ENCODE measurements at regions of chr9 and their contacts with region 1.

Region 1: DNA sequence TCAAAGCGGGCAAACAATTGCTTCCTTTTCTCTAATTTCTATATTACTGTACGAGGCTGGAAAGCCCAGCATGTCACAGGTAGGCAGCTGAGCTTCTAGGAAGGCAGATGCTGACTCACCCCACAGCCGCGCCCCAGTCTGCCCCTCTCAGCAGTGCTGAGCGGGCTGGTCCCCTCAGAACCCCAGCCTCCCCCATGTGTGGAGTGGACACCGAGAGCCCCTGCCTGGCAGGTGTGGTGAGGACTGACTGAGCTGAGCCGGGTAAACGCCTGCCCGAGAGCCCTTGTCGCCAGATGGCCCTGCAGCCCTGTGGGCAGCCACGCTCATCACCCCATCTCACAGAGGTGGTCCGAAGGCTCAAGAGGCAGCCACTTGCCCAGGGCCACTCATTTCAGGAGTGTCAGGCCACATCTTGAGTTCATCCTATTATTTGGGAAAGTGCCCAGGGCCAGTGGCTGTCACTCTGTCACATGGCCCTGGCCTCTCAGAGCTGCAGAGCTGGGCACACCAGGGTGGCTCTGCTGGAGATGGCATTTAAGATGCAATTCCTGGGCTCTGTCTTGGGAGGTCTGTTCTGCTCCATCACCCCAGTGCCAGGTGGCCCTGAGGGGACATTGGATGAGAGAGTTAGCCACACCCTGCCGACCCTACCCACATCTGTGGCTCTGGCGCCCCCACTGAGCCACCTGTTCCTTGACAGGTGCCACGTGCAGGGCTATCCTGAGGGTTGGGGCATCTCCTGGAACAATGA is 12.4 kb downstream of the CARD19 start:
- DNase-seq: no peak
- ATAC-seq: peak in 3 of 4 experiments; percentile 36 to 62 (median 55)
- H3K4me3 ChIP-seq: no peak overlapping the region
- H3K4me3 Mint-ChIP-seq: no peak overlapping the region
- H3K27ac ChIP-seq: no peak overlapping the region
- H3K27ac Mint-ChIP-seq: no peak overlapping the region
- H3K4me1 ChIP-seq: peaks cover 0 to 37% of the 10 kb centered on the region in 2 experiments
- H3K4me1 Mint-ChIP-seq: peaks cover 50 to 58% (median 53%) of the 10 kb centered on the region in 3 donors
- H3K27me3 ChIP-seq: no peaks in the 10 kb centered on the region
- H3K27me3 Mint-ChIP-seq: no peaks in the 10 kb centered on the region

Region 2: DNA sequence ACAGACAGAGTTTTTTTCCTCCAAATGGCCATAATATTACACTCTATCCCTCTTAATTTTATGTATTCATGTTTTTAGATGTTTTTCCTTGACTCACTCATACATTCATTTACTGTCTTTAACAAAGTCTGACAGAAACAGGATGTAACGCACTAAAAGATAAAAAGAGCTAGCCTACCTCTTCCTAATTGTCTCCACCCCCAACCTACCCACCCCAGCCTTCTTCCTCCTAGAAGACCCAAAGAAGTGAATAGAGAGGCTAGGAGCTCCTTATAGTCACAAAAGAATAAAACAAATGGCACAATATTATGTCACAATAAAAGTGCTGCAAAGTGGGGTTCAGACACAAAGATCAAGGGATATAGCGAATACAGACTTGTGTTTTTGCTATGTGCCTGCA is 784.0 kb before region 1 on chr9:
- CTCF ChIA-PET with region 1: no interaction called
- POLR2A ChIA-PET with region 1: no interaction called
- DNase-seq: peak in 2 of 35 experiments; percentile 3 to 7
- ATAC-seq: no peak
- H3K4me3 ChIP-seq: peak overlapping the region; percentile 90 to 95
- H3K4me3 Mint-ChIP-seq: peak overlapping the region; percentile 92 to 96 (median 96)
- H3K27ac ChIP-seq: no peak overlapping the region
- H3K27ac Mint-ChIP-seq: peak overlapping the region; percentile 97 to 99
- H3K4me1 ChIP-seq: peaks cover 13 to 18% of the 10 kb centered on the region in 2 experiments
- H3K4me1 Mint-ChIP-seq: peaks cover 34 to 40% (median 39%) of the 10 kb centered on the region in 3 donors
- H3K27me3 ChIP-seq: no peaks in the 10 kb centered on the region
- H3K27me3 Mint-ChIP-seq: no peaks in the 10 kb centered on the region

Region 3: GRCh38 chr9:93129286-93129685 is 20.8 kb after region 1 on chr9:
- CTCF ChIA-PET with region 1: interaction called, 3 read pairs
- POLR2A ChIA-PET with region 1: interaction called in 1 of 2 experiments, 11 read pairs
- DNase-seq: no peak
- ATAC-seq: no peak
- H3K4me3 ChIP-seq: no peak overlapping the region
- H3K4me3 Mint-ChIP-seq: no peak overlapping the region
- H3K27ac ChIP-seq: no peak overlapping the region
- H3K27ac Mint-ChIP-seq: peak overlapping the region; percentile 61 to 64
- H3K4me1 ChIP-seq: peaks cover 21 to 92% of the 10 kb centered on the region in 2 experiments
- H3K4me1 Mint-ChIP-seq: peaks cover 76 to 80% (median 77%) of the 10 kb centered on the region in 3 donors
- H3K27me3 ChIP-seq: no peaks in the 10 kb centered on the region
- H3K27me3 Mint-ChIP-seq: no peaks in the 10 kb centered on the region

Region 4: DNA sequence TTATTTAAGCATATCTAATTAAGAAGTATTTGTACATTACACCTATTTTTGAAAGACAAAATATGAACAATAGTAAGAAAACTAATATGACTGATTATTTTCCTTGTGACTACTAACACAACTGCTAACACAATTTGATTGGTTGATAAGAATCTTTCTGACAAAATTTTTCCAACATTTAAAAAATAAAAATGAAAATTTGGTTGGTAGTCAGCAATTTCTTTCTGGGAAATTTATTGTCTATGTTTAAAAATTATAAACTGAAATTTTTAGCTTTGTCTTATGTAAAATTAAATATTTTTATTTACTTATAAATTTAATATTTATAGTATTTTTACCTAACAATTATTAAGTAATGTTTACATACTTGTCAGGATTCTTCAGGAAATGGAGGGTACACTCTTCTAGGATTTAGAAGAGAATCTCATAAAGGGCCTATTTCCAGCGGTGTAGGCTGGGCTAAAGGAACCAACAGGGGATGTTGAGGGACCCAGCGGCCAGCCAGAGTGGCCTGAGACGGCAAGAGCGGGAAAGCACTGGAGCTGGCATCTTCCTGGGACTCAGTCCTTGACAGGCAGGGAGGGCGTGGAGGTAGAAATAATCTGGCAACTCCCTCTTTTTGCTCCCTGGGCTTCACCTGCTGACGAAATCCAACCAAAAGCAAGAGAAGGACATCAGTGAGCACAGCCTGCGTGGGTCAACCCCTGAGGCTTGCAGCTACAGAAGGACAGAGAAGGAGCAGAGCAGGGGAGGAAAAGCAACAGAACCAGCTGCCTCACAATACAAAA is 328.4 kb after region 1 on chr9:
- CTCF ChIA-PET with region 1: no interaction called
- POLR2A ChIA-PET with region 1: no interaction called
- DNase-seq: no peak
- ATAC-seq: no peak
- H3K4me3 ChIP-seq: no peak overlapping the region
- H3K4me3 Mint-ChIP-seq: no peak overlapping the region
- H3K27ac ChIP-seq: no peak overlapping the region
- H3K27ac Mint-ChIP-seq: no peak overlapping the region
- H3K4me1 ChIP-seq: peaks cover 0 to under 1% of the 10 kb centered on the region in 2 experiments
- H3K4me1 Mint-ChIP-seq: no peaks in the 10 kb centered on the region
- H3K27me3 ChIP-seq: no peaks in the 10 kb centered on the region
- H3K27me3 Mint-ChIP-seq: peaks cover 0 to 1% of the 10 kb centered on the region in 2 donors